Cardiac septum (tissue), 1 donor: ENCODE measurements at regions of chr2 and their contacts with region 1.

Region 1: DNA sequence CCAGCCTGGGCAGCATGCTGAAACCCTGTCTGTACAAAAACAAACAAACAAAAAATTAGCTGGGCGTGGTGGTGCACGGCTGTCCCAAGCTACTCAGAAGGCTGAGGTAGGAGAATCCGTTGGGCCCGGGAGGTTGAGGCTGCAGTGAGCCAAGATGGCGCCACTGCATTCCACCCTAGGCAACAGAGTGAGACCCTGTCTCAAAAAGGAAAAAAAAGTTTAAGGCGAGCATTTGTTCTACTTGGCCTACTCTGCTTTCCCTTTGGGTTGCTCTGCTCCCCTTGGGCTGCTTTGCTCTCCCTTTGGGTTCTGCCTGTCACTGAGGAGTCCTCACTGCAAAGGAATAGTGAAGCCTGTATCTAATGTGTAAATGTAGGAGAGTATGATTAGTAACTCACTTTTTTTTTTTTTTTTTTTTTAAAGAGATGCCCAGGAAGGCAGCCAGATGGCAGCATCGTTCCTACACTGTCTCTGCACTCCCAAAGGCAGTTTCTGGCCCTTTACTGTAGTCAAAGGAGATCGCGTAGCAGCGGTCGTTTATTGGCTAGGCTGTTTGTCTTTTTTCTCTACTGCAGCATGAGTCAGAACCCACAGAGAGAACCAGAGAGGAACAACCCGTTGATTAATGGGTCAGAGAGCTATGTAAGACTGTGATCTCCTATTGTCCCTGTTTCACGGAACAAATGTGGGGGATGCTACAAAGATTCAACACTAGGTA is 118.3 kb upstream of the CWC22 start:
- DNase-seq: no peak

Region 2: DNA sequence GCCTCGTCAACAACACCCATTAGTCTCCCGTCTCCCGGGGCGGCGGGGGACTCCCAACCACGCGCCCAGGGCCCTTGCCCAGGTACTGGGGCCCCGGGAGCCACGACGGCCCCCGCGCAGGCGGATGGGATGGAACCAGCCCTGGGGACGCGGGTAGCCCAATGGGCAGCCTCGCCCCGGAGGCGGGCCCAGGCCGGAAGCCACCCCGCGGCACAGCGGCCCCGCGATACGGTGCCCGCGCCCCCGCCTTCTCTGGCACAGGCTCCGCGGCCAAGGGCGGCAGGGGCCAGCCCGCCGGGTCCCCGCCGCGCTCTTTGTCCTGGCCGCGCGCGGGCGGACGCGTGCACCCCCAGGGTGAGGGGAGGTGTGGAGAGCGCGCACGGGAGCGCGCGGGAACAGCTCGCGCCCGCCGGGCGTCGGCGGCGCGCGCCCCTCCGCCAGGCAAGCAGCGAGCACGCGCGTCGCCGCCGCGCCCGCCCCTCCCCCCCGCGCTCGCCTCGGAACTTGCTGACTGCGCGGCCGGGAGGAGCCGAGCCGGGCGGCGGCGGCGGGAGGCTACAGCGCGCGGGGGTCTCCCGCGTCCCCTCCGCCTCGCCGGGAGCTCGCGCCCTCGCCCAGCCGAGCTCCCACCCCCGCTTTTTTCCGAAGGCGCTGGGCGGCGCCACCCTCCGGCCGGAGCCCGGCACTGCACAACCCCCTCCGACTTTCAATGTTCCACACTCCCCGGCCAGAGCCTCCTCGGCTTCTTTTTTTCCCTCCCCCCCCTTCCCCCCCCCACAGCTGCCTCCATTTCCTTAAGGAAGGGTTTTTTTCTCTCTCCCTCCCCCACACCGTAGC is 854.9 kb after region 1 on chr2 and contains the start of gene UBE2E3:
- intact Hi-C with region 1: loop called (anchors 10 kb)
- DNase-seq: peak; percentile 92
- total RNA-seq, gene UBE2E3: 41.0 TPM

Region 3: GRCh38 chr2:181058378-181059269 is 933.2 kb after region 1 on chr2:
- intact Hi-C with region 1: loop called (anchors 2 kb)
- DNase-seq: no peak